HepG2 (cell line): ENCODE measurements at regions of chr10 and their contacts with region 1.

Region 1: GRCh38 chr10:29535012-29535777 is 99.6 kb downstream of the SVIL start:
- DNase-seq: peak; percentile 93
- ATAC-seq: peak; percentile 95
- H3K4me3 ChIP-seq: peak overlapping the region; percentile 2 to 51 (median 14); a peak in 3 of 6 replicates
- H3K27ac ChIP-seq: peak overlapping the region; percentile 64
- H3K4me1 ChIP-seq: peaks cover 34% of the 10 kb centered on the region
- H3K27me3 ChIP-seq: no peaks in the 10 kb centered on the region
- CTCF ChIP-seq: peak; percentile 82
- EP300 ChIP-seq: peak in 1 of 2 experiments; percentile 75; a peak in 2 of 4 replicates
- POLR2A ChIP-seq: no peak
- RAD21 ChIP-seq: no peak

Region 2: DNA sequence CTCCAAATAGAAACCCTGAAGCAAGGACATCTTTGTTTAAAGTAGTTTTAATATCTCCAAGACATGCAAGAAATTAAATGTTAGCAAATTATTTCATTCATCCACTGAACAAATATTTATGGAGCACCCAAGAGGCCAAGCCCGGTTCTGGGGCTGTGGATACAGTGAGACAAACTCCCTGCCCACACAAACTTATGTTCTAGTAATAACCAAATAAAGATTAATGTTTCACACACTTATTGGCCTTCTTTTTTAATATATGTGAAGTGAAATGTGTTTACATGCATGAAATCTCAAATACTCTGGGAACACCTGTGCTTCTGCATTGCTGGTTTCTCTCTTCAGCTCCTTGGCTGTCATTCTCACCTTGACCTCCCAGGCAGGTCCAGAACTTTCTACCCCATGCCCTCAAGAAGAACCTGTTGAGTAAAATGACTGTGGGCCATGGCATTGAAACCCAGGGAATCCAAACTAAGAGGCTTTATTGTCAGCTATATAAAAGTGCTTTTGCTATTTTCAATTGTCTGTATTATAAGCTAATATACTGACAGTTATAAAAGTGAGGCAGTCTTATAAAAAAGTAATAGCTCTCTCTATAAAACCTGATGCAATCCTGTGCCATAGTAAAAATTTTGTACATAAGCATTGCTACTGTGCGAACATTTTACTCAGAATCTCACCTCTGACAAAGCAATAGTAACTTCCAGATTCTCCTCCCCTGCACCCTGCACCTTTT is 55.9 kb after region 1 on chr10:
- CTCF ChIA-PET with region 1: interaction called, 3 read pairs
- POLR2A ChIA-PET with region 1: no interaction called
- in situ Hi-C with region 1: no loop called
- intact Hi-C with region 1: loop called (anchors 5 kb)
- DNase-seq: no peak
- ATAC-seq: no peak
- H3K4me3 ChIP-seq: no peak overlapping the region
- H3K27ac ChIP-seq: no peak overlapping the region
- H3K4me1 ChIP-seq: peaks cover 43% of the 10 kb centered on the region
- H3K27me3 ChIP-seq: no peaks in the 10 kb centered on the region
- CTCF ChIP-seq: no peak
- EP300 ChIP-seq: no peak
- POLR2A ChIP-seq: no peak
- RAD21 ChIP-seq: no peak

Region 3: GRCh38 chr10:29735596-29736318 is 200.6 kb after region 1 on chr10:
- CTCF ChIA-PET with region 1: no interaction called
- POLR2A ChIA-PET with region 1: no interaction called
- in situ Hi-C with region 1: no loop called
- intact Hi-C with region 1: loop called (anchors 1 kb)
- DNase-seq: peak; percentile 61
- ATAC-seq: peak; percentile 90
- H3K4me3 ChIP-seq: peak overlapping the region; percentile 73 to 88 (median 85)
- H3K27ac ChIP-seq: peak overlapping the region; percentile 39
- H3K4me1 ChIP-seq: peaks cover 46% of the 10 kb centered on the region
- H3K27me3 ChIP-seq: peaks cover 0 to 13% of the 10 kb centered on the region in 2 experiments; a peak in 3 of 5 replicates
- CTCF ChIP-seq: peak; percentile 97
- EP300 ChIP-seq: no peak
- POLR2A ChIP-seq: peak in 1 of 2 experiments; percentile 44; a peak in 1 of 4 replicates
- RAD21 ChIP-seq: peak; percentile 81